MCF 10A (cell line): ENCODE measurements at regions of chr4 and their contacts with region 1.

Region 1: GRCh38 chr4:80365928-80366327 is 30.4 kb downstream of the CFAP299 start:
- DNase-seq: peak; percentile 71
- H3K4me3 Mint-ChIP-seq: no peak overlapping the region
- H3K27ac Mint-ChIP-seq: no peak overlapping the region
- H3K4me1 Mint-ChIP-seq: peaks cover 5% of the 10 kb centered on the region
- H3K27me3 Mint-ChIP-seq: no peaks in the 10 kb centered on the region
- CTCF ChIP-seq: peak; percentile 67

Region 2: GRCh38 chr4:80540785-80541469 is 175.0 kb after region 1 on chr4:
- CTCF ChIA-PET with region 1: interaction called, 10 read pairs
- POLR2A ChIA-PET with region 1: no interaction called
- intact Hi-C with region 1: no loop called
- DNase-seq: no peak
- H3K4me3 Mint-ChIP-seq: no peak overlapping the region
- H3K27ac Mint-ChIP-seq: no peak overlapping the region
- H3K4me1 Mint-ChIP-seq: peaks cover 3% of the 10 kb centered on the region
- H3K27me3 Mint-ChIP-seq: no peaks in the 10 kb centered on the region
- CTCF ChIP-seq: no peak

Region 3: GRCh38 chr4:80740375-80740774 is 374.4 kb after region 1 on chr4:
- CTCF ChIA-PET with region 1: no interaction called
- POLR2A ChIA-PET with region 1: no interaction called
- intact Hi-C with region 1: loop called (anchors 10 kb)
- DNase-seq: peak; percentile 29
- H3K4me3 Mint-ChIP-seq: no peak overlapping the region
- H3K27ac Mint-ChIP-seq: no peak overlapping the region
- H3K4me1 Mint-ChIP-seq: peaks cover 9% of the 10 kb centered on the region
- H3K27me3 Mint-ChIP-seq: no peaks in the 10 kb centered on the region
- CTCF ChIP-seq: no peak

Region 4: DNA sequence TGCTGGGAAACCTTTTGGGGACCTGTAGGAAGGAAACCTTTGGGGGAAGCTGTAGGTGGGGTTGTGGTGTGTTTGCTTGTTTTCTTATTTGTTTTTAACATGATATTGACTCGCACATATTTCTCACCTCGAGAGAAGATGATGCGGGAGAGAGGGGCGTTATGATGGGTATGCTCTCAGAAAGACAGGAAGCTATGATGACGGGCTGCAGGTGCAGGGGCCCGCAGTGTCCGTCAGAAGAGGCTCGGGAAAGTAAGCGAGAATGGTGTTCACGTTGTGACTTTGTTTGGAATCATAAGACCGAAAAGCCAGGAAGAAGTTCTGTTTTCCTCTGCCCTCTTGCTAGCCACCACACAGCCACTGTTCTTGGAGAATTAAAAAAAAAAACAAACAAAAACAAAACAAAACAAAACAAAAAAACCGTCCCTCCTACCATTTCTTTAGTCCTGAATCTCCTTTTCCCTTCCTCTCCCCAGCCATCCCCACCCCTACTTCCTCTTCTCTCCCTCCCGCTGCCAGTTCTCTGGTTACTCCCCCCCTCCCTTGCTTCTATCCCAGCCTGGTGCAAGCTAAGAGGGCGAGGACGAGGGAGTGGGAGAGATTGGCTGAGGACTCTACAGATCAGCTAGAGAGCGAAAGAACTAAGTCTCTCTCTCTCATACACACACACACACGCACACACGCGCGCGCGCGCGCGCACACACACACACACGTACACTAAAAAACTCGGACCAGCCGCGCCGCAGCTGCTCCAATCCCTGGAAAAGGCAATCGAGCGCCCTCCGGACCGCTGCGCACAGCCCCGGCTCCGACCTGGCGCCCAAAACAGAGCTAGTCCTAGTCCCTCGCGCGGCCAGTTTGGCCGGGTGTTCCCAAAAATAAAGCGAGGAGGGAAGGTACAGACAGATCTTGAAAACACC is 664.4 kb after region 1 on chr4 and contains the start of gene BMP3:
- CTCF ChIA-PET with region 1: interaction called, 26 read pairs
- POLR2A ChIA-PET with region 1: no interaction called
- intact Hi-C with region 1: no loop called
- DNase-seq: peak; percentile 28
- H3K4me3 Mint-ChIP-seq: peak within 1 kb of the TSS; percentile 72
- H3K27ac Mint-ChIP-seq: peak within 1 kb of the TSS; percentile 7
- H3K4me1 Mint-ChIP-seq: peaks cover 9% of the 10 kb centered on the region
- H3K27me3 Mint-ChIP-seq: no peaks in the 10 kb centered on the region
- CTCF ChIP-seq: no peak
- total RNA-seq, gene BMP3: not detected in 2 replicates

Region 5: GRCh38 chr4:81052119-81053068 is 686.5 kb after region 1 on chr4:
- CTCF ChIA-PET with region 1: interaction called, 189 read pairs
- POLR2A ChIA-PET with region 1: no interaction called
- intact Hi-C with region 1: loop called (anchors 1 kb)
- DNase-seq: peak; percentile 79
- H3K4me3 Mint-ChIP-seq: no peak overlapping the region
- H3K27ac Mint-ChIP-seq: no peak overlapping the region
- H3K4me1 Mint-ChIP-seq: no peaks in the 10 kb centered on the region
- H3K27me3 Mint-ChIP-seq: no peaks in the 10 kb centered on the region
- CTCF ChIP-seq: peak; percentile 59